ENCODE measurements at regions of chr1 and their contacts with region 1.

Region 1: GRCh38 chr1:200279810-200280411 is 129.9 kb downstream of the ZNF281 start:
- DNase-seq: peak in 1 of 2 experiments; percentile 65
- H3K4me3 ChIP-seq: no peak overlapping the region
- H3K4me3 Mint-ChIP-seq: no peak overlapping the region
- H3K27ac Mint-ChIP-seq: no peak overlapping the region
- H3K4me1 ChIP-seq: peaks cover 24% of the 10 kb centered on the region
- H3K4me1 Mint-ChIP-seq: peaks cover 20% of the 10 kb centered on the region
- H3K27me3 ChIP-seq: no peaks in the 10 kb centered on the region
- H3K27me3 Mint-ChIP-seq: no peaks in the 10 kb centered on the region
- CTCF ChIP-seq: peak; percentile 61 to 72

Region 2: DNA sequence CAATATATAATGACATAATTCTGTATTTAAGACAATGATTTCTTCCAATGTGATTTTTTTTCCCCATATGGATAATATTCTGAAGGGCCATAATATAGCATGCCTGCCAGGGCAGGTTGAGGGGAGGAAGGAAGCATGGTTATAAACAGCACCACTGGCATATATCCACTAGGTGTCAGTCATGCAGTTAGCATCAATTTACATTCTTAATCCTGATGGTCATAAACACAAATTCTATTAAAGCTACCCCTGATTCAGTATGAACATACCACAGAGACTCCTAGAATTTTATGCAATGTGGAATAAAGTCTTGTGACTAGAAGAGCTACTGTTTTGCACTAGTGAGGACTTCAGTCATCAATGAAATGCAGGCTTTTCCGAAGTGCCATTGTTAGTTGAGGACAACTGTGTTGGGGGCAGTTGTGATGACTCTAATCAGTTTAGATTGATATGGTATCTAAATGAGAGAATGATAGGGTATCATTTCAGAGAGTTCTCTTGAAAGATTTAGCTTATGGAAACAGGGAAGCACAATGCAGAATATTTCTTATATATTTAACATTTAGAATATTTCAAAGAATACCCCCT is 595.1 kb before region 1 on chr1:
- CTCF ChIA-PET with region 1: interaction called, 4 read pairs
- POLR2A ChIA-PET with region 1: no interaction called
- intact Hi-C with region 1: loop called (anchors 1 kb)
- DNase-seq: peak in 1 of 2 experiments; percentile 53
- H3K4me3 ChIP-seq: no peak overlapping the region
- H3K4me3 Mint-ChIP-seq: no peak overlapping the region
- H3K27ac Mint-ChIP-seq: no peak overlapping the region
- H3K4me1 ChIP-seq: peaks cover 15% of the 10 kb centered on the region
- H3K4me1 Mint-ChIP-seq: peaks cover 7% of the 10 kb centered on the region
- H3K27me3 ChIP-seq: no peaks in the 10 kb centered on the region
- H3K27me3 Mint-ChIP-seq: no peaks in the 10 kb centered on the region
- CTCF ChIP-seq: peak; percentile 74 to 76

Region 3: GRCh38 chr1:200029035-200029821 is 250.7 kb before region 1 on chr1:
- CTCF ChIA-PET with region 1: no interaction called
- POLR2A ChIA-PET with region 1: no interaction called
- intact Hi-C with region 1: loop called (anchors 2 kb)
- DNase-seq: peak; percentile 60 to 81
- H3K4me3 ChIP-seq: peak overlapping the region; percentile 53
- H3K4me3 Mint-ChIP-seq: peak overlapping the region; percentile 74
- H3K27ac Mint-ChIP-seq: peak overlapping the region; percentile 84
- H3K4me1 ChIP-seq: peaks cover 21% of the 10 kb centered on the region
- H3K4me1 Mint-ChIP-seq: peaks cover 9% of the 10 kb centered on the region
- H3K27me3 ChIP-seq: no peaks in the 10 kb centered on the region
- H3K27me3 Mint-ChIP-seq: no peaks in the 10 kb centered on the region
- CTCF ChIP-seq: no peak

Region 4: GRCh38 chr1:200118779-200119505 is 161.0 kb before region 1 on chr1:
- CTCF ChIA-PET with region 1: no interaction called
- POLR2A ChIA-PET with region 1: no interaction called
- intact Hi-C with region 1: no loop called
- DNase-seq: no peak
- H3K4me3 ChIP-seq: no peak overlapping the region
- H3K4me3 Mint-ChIP-seq: no peak overlapping the region
- H3K27ac Mint-ChIP-seq: no peak overlapping the region
- H3K4me1 ChIP-seq: peaks cover 7% of the 10 kb centered on the region
- H3K4me1 Mint-ChIP-seq: no peaks in the 10 kb centered on the region
- H3K27me3 ChIP-seq: no peaks in the 10 kb centered on the region
- H3K27me3 Mint-ChIP-seq: no peaks in the 10 kb centered on the region
- CTCF ChIP-seq: no peak

Region 5: DNA sequence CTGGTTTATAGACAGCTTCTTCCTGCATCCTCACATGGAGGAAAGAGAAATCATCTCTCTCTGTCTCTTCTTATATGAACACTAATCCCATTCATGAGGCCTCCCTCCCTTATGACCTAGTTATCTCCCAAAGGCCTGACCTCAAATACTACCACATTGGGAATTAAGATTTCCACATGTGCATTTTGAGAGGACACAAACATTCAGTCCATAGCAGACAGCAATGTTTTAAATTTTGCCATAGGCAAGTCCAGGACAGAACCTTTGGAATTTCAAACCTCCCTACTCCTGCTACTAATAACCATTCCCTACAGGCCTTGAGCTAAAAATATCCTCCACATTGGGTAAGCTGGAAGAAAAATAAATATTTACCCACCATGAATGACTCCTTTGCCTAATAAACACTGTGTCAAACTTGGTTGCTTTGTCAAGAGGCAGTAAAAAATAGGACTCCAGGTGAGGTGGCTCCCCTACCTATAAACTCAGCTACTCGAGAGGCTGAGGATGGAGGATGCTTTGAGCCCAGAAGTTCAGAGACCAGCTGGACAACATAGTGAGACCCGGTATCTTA is 16.3 kb after region 1 on chr1:
- CTCF ChIA-PET with region 1: interaction called, 5 read pairs
- POLR2A ChIA-PET with region 1: no interaction called
- intact Hi-C with region 1: loop called (anchors 1 kb)
- DNase-seq: peak; percentile 51 to 61
- H3K4me3 ChIP-seq: no peak overlapping the region
- H3K4me3 Mint-ChIP-seq: peak overlapping the region; percentile 20
- H3K27ac Mint-ChIP-seq: peak overlapping the region; percentile 64
- H3K4me1 ChIP-seq: peaks cover 34% of the 10 kb centered on the region
- H3K4me1 Mint-ChIP-seq: peaks cover 31% of the 10 kb centered on the region
- H3K27me3 ChIP-seq: no peaks in the 10 kb centered on the region
- H3K27me3 Mint-ChIP-seq: no peaks in the 10 kb centered on the region
- CTCF ChIP-seq: no peak

Region 6: GRCh38 chr1:200372080-200372884 is 92.4 kb after region 1 on chr1:
- CTCF ChIA-PET with region 1: no interaction called
- POLR2A ChIA-PET with region 1: no interaction called
- intact Hi-C with region 1: loop called (anchors 1 kb)
- DNase-seq: peak; percentile 74 to 79
- H3K4me3 ChIP-seq: no peak overlapping the region
- H3K4me3 Mint-ChIP-seq: peak overlapping the region; percentile 45
- H3K27ac Mint-ChIP-seq: peak overlapping the region; percentile 66
- H3K4me1 ChIP-seq: peaks cover 68% of the 10 kb centered on the region
- H3K4me1 Mint-ChIP-seq: peaks cover 79% of the 10 kb centered on the region
- H3K27me3 ChIP-seq: no peaks in the 10 kb centered on the region
- H3K27me3 Mint-ChIP-seq: no peaks in the 10 kb centered on the region
- CTCF ChIP-seq: no peak

Region 7: GRCh38 chr1:200510228-200510623 is 230.3 kb after region 1 on chr1:
- CTCF ChIA-PET with region 1: no interaction called
- POLR2A ChIA-PET with region 1: no interaction called
- intact Hi-C with region 1: loop called (anchors 1 kb)
- DNase-seq: peak; percentile 73 to 83
- H3K4me3 ChIP-seq: no peak overlapping the region
- H3K4me3 Mint-ChIP-seq: no peak overlapping the region
- H3K27ac Mint-ChIP-seq: no peak overlapping the region
- H3K4me1 ChIP-seq: 0 out of 2 replicates have a peak, but pooled peaks cover 5% of the 10 kb centered on the region
- H3K4me1 Mint-ChIP-seq: no peaks in the 10 kb centered on the region
- H3K27me3 ChIP-seq: no peaks in the 10 kb centered on the region
- H3K27me3 Mint-ChIP-seq: peaks cover 8% of the 10 kb centered on the region
- CTCF ChIP-seq: peak; percentile 83 to 87

Measured in Caco-2 (cell line).